ENCODE measurements at regions of chr11 and their contacts with region 1.

Region 1: DNA sequence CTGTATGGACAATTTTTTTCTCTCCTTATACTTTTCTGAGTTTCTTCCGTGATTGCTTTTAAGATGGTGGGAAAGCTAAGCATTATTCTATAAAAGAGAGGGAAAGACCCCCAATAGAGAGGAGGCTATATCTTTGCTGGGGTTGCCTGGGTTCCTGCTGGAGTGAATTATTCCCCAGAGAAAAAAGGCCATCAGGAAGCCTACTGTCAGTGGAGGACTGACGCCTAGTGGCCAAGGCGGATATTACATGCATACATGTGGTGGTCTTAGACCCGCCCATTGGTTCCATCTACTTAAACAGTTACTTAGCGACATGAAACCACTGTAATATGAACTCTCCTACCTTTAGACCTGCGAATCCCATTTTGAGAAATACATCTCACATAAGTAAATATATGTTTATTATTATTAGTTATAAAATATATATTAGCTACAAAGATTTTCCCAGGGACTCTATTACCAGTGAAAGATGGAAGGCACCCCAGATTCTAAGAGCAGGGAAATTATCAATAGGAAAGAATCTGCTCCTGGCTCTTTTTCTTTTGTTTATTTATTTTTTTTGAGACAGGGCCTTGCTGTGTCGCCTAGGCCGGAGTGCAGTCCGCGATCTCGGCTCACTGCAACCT is 15.7 kb upstream of the PGA3 start:
- DNase-seq: peak; percentile 64
- H3K4me3 Mint-ChIP-seq: no peak overlapping the region
- H3K27ac Mint-ChIP-seq: no peak overlapping the region
- H3K4me1 Mint-ChIP-seq: no peaks in the 10 kb centered on the region
- H3K27me3 Mint-ChIP-seq: peaks cover 14% of the 10 kb centered on the region

Region 2: GRCh38 chr11:60775420-60775961 is 412.1 kb before region 1 on chr11:
- intact Hi-C with region 1: loop called (anchors 10 kb)
- DNase-seq: peak; percentile 69
- H3K4me3 Mint-ChIP-seq: no peak overlapping the region
- H3K27ac Mint-ChIP-seq: no peak overlapping the region
- H3K4me1 Mint-ChIP-seq: peaks cover 5% of the 10 kb centered on the region
- H3K27me3 Mint-ChIP-seq: peaks cover 8% of the 10 kb centered on the region

Region 3: DNA sequence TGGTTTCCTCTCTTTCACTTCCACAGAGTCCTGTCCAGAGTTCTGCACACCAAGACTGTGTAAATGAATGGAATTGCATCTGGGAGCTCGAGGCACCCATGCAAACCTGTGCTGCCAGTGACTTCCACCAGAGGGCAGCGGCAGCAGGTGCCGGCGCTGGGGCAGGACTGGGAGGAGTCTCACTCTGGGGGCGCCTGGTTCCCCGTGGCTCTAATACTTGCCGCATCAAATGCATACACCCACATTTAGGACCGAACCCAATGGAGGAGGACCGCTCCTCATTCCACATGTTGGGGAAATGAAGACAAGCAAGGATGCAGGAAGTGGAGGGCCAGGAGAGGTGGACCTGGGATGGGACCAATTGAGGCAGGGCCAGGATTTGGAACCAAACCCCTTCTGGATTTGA is 217.2 kb before region 1 on chr11:
- intact Hi-C with region 1: loop called (anchors 1 kb)
- DNase-seq: peak; percentile 68
- H3K4me3 Mint-ChIP-seq: peak overlapping the region; percentile 47
- H3K27ac Mint-ChIP-seq: no peak overlapping the region
- H3K4me1 Mint-ChIP-seq: peaks cover 43% of the 10 kb centered on the region
- H3K27me3 Mint-ChIP-seq: peaks cover 12% of the 10 kb centered on the region

Region 4: GRCh38 chr11:61021661-61022212 is 165.9 kb before region 1 on chr11:
- intact Hi-C with region 1: loop called (anchors 2 kb)
- DNase-seq: peak; percentile 78
- H3K4me3 Mint-ChIP-seq: peak overlapping the region; percentile 66
- H3K27ac Mint-ChIP-seq: peak overlapping the region; percentile 89
- H3K4me1 Mint-ChIP-seq: peaks cover 65% of the 10 kb centered on the region
- H3K27me3 Mint-ChIP-seq: no peaks in the 10 kb centered on the region

Region 5: DNA sequence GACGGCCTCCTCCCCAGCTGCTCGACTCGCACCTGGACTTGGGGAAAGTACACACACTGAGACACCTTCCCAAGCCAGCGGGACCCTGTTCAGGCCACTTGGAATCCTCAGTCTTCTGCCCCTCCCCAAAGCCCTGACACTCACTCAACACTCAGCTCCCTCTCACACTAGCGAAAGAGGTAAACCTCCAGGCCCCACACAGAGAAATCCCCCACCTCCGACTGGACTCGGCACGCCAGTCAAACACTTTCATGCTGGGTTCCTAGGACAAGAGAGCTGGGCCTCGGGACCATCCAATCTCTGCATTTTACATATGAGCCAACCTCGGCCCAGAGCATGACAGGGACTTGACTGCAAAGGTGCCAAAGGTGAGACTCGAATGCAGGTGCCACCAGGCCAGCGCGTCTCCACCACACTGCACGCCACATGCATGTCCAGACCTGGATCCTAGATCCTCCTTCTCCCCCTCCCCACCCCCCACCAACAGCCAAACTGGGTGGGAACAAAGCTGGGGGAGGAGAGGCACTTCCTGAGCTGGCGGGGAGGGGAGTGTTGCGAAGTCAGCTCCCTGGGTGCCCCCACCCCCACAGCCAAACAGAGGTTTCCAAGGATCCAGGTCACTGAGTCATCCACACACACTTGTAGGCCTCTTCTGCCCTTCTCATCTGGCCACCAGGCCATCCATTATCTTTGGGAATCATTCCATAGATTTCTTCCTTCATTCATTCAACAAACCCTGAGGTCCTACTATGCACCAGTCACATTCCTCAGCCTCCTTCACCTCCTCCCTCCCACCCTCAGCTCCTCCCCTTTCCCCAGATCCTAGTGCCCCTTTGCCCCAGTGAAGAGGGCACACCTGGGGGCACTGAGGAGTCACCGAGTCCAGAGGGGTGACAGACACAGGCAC is 96.0 kb before region 1 on chr11:
- intact Hi-C with region 1: no loop called
- DNase-seq: peak; percentile 41
- H3K4me3 Mint-ChIP-seq: peak overlapping the region; percentile 96
- H3K27ac Mint-ChIP-seq: peak overlapping the region; percentile 98
- H3K4me1 Mint-ChIP-seq: peaks cover 77% of the 10 kb centered on the region
- H3K27me3 Mint-ChIP-seq: no peaks in the 10 kb centered on the region

Region 6: DNA sequence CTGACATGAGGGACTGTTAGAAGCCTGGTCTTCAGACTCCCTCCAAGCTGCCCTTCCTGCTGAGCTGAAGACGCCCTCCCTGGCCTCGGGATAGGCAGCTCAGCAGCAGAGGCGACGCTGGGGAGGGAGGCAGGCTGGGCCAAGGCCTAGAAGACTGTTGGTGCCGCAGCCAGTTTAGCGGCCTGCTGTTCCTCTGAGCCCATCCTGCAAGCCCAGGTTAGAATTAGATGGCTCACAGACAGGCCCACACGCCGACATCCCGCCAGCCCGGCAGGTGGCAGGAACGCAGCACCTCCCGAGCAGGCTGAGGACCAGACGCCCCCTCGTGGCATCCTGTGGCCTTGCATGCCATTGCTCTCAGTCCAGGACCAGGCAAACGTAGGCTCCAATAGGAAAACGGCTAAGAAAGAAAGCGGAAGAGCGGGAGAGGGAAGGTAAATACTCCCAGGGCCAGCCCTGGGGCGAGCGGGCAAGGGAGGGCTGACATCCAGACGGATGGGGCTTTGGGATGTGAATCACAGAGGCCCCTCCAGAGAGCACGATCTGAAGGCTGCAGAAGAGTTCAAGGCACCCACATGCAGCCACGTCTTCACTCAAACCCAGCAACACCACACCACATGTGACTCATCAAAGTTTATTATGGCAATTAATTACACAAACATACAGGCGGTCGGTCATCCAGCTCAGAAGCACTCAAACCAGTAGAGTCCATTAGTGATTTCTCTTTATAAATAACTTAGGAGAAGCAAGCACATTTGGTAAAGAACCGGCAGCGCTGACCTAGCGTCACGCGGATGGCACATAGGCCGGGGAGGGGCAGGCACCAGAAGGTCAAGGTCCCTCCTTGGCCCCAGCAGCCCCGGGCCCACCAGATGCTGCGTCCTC is 57.7 kb before region 1 on chr11:
- intact Hi-C with region 1: loop called (anchors 1 kb)
- DNase-seq: peak; percentile 82
- H3K4me3 Mint-ChIP-seq: peak overlapping the region; percentile 63
- H3K27ac Mint-ChIP-seq: peak overlapping the region; percentile 65
- H3K4me1 Mint-ChIP-seq: peaks cover 16% of the 10 kb centered on the region
- H3K27me3 Mint-ChIP-seq: no peaks in the 10 kb centered on the region

Region 7: DNA sequence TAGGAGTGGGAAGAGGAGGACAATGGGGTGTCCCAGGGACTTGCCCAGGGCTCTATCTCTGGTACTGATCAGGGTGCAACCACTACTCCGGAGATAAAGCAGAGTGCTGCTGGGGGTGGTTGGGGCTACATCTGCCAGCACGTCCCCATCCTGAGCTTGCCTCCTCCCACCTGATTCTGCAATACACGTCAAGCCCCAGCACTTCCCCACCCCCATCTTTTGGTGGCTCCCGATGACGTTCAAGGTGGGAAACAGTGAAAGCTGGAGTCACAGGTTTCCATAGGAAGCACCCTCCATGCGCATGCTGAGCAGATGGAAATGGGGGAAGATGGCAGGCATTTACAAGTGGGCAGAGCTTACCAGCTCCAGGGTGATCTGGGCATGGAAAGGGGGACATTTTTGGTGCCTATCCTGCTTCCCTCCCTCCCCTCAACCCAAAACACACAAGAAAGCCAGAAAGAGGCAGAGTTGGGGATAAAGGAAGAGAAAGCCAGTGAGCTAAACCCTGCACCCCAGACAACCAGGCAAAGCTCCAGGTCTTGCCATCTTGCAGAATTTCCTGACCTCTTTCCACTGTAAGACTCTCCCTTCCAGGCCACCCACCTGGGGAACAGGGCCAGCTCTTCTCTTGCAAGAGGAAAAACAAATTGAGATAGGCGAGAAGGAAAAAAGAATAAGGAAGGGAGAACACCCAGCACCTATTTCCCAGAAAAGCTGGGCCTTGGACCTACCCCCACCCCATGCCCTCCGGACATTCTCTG is 377.5 kb after region 1 on chr11:
- intact Hi-C with region 1: no loop called
- DNase-seq: no peak
- H3K4me3 Mint-ChIP-seq: no peak overlapping the region
- H3K27ac Mint-ChIP-seq: no peak overlapping the region
- H3K4me1 Mint-ChIP-seq: no peaks in the 10 kb centered on the region
- H3K27me3 Mint-ChIP-seq: peaks cover 17% of the 10 kb centered on the region